ENCODE measurements at regions of chr17 and their contacts with region 1.

Region 1: DNA sequence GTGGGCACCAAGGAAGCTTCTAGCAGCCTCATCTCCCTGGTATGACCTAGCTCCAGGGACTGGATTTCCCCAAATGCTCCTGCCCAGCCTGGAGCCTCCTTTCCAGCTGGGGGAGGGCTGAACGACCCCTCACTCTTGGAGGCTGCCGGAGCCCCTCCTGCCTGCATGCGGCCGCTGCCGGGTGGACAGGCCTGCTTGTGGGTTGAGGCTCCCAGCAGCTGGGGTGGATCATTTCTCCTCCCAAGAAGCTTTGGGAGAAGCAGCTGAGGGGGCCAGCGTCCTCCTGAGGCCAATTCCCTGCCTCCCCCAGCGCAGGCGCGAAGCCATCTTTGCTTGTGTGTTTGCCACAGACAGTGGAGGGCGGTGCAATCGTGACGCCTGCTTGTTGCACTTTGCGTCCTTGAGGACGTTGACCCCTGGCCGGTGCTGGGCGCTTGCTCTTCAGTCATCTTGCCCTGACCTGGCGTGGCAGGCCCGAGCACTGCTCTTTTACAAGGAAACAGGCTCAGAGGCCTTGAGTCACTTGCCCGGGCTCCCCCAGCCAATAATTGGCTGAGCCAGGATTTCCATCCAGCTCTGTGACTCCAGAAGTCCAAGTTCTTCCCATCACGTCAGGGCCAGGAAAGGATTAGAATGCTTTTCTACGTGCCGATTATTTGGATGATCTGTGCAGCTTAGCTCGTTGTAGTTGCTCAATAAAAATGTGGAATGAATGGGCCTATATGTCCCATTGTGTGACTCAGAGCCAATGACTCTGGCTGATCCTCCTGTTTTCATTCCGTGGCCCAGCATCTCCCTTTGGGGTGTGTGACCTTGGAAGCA is 213.9 kb downstream of the SEC14L1 start:
- DNase-seq: peak; percentile 90
- H3K4me3 ChIP-seq: no peak overlapping the region
- H3K27ac ChIP-seq: peak overlapping the region; percentile 98
- H3K27me3 ChIP-seq: no peaks in the 10 kb centered on the region
- CTCF ChIP-seq: no peak

Region 2: GRCh38 chr17:77365584-77366186 is 11.1 kb after region 1 on chr17:
- CTCF ChIA-PET with region 1: no interaction called
- POLR2A ChIA-PET with region 1: interaction called, 10 read pairs
- DNase-seq: peak; percentile 66
- H3K4me3 ChIP-seq: no peak overlapping the region
- H3K27ac ChIP-seq: peak overlapping the region; percentile 96
- H3K27me3 ChIP-seq: no peaks in the 10 kb centered on the region
- CTCF ChIP-seq: no peak

Region 3: DNA sequence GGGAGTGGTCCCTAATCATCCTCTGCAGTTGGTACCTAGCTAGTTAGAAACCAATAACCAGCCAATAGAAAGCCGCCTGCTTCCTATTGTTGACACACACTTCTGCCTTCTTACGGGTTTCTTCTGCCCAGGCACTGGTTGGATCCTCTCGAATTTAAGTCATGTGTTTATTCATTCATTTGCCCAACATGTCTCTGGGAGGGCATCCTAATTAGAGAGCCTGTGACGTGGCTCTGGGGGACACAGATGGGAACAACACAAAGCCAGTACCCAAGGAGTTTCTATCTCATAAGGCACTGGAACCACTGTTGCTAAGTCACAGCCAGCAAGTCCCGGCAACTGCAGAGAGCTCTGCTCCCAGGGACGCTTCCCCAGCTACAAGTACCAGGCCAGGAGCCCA is 303.2 kb after region 1 on chr17:
- CTCF ChIA-PET with region 1: no interaction called
- POLR2A ChIA-PET with region 1: no interaction called
- DNase-seq: no peak
- H3K4me3 ChIP-seq: no peak overlapping the region
- H3K27ac ChIP-seq: no peak overlapping the region
- H3K27me3 ChIP-seq: peaks cover 29% of the 10 kb centered on the region
- CTCF ChIP-seq: no peak

Region 4: DNA sequence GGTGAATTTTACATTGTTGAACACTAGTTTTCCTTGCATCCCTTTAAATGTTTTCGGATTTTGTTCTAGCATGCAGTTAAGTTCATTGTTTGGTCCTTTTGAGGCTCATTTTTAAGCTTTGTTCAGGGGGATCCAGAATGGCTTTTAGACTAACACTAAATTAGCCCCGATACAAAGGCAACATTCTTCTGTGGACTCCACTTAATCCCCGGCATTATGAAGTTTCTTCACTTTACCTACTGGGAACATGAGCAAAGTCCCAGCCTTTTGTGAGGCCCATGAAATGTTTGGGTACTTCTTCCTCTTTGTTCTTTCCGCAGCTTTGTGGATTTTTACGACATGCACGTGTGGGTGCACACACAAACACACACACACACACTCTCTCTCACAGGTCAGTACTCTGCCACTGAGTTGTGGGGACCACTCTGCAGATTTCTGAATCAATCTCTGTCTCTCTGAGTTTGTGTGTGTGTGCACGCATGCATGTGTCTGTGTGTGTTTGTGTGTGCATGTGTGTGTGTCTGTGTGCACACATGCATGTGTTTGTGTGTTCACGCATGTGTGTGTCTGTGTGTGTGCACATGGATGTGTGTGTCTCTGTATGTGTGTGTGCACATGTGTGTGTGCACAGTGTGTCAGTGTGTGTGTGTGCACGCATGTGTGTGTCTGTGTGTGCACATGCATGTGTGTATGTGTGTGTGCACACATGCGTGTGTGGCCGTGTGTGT is 363.5 kb after region 1 on chr17:
- CTCF ChIA-PET with region 1: no interaction called
- POLR2A ChIA-PET with region 1: no interaction called
- DNase-seq: no peak
- H3K4me3 ChIP-seq: no peak overlapping the region
- H3K27ac ChIP-seq: no peak overlapping the region
- H3K27me3 ChIP-seq: peaks cover 5% of the 10 kb centered on the region
- CTCF ChIP-seq: no peak

Measured in AG04450 (cell line).